Activated naive CD8-positive, alpha-beta T cell treated with anti-CD3 and anti-CD28 coated beads, Interleukin-2, amount 10 ng/mL, durations not matched to agents 7 days and 5 days (primary cell): ENCODE measurements at regions of chr3 and their contacts with region 1.

Region 1: DNA sequence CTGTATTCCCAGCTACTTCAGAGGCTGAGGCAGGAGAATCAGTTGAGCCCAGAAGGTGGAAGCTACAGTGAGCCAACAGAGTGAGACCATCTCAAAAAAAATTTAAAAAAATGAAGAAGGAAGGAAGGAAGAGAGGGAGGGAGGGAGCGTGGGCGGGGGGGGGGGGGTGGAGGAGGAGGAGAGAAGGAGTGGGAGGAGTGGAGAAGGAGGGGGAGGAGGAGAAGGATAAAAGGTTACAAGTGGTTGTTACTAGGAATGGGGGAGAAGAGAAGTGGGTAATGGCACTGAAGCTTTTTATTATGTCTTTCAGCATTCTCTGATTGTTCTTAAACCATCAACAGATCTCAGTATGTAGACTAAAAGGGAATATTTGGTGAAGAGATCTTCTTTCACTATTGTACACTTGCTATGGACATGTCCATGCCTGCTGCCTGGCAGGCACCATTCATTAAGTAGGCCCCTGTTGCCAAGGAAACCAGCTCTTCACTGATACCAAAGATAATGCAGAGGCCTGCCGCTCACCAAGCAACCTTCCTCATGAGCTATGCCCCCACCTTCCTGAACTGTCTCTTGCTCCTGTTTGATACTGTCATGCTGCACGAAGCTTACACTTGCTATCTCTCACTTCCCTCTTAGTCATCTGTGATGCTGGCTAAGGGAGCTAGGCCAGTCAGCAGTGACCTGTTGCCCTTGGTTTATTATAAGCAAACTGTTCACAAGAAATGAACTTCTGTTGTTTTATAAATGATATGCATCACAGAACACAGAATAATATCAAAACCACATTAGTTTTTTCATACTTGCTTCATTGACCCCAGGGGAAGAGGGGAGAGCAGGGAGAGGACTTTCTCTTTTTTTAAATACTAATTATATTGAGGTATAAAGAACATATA is 23.1 kb downstream of the EPM2AIP1 start:
- DNase-seq: no peak
- ATAC-seq: peak; percentile 94
- H3K4me3 Mint-ChIP-seq: peak overlapping the region; percentile 26
- H3K27ac Mint-ChIP-seq: peak overlapping the region; percentile 64
- H3K4me1 Mint-ChIP-seq: peaks cover 33% of the 10 kb centered on the region
- H3K27me3 Mint-ChIP-seq: no peaks in the 10 kb centered on the region

Region 2: DNA sequence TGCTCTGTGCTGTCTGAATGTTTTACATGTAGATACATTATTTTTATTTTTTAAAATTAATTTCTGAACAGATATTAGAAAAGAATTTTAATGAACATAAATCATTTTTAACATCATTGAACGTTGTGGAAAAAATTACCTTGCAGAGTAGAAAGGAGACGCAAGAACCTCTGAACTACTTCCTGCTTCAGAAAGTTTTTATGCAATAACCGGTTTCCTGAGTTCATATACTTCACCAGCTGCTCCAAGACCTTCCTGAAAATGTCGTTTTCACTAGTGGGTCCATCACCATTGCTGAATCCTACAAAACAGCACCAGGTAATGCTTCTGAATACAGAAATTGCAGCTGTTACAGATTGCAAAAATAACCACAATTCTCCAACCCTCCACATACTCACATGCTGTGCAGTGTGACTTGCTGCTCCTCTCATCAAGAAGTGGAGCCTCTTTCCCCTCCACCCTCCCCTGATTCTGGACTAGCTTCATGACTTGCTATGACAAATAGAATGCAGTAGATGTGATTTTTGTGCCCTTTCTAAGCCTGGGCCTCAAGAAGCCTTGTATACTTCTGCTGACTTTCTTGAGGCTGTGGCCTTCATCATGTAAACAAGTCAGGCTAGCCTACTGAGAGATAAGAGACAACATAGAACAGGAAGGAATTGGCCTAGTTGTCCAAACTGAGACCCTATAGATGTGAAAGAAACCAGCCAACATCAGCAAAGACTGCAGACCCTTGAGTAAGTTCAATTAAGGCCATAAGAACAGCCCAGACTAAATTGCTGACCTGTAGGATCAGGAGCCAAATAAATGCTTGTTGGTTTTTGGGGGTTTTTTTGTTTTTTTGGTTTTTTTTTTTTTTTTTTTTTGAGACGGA is 105.4 kb before region 1 on chr3:
- POLR2A ChIA-PET with region 1: no interaction called
- DNase-seq: no peak
- ATAC-seq: peak; percentile 44
- H3K4me3 Mint-ChIP-seq: no peak overlapping the region
- H3K27ac Mint-ChIP-seq: peak overlapping the region; percentile 66
- H3K4me1 Mint-ChIP-seq: peaks cover 15% of the 10 kb centered on the region
- H3K27me3 Mint-ChIP-seq: no peaks in the 10 kb centered on the region

Region 3: DNA sequence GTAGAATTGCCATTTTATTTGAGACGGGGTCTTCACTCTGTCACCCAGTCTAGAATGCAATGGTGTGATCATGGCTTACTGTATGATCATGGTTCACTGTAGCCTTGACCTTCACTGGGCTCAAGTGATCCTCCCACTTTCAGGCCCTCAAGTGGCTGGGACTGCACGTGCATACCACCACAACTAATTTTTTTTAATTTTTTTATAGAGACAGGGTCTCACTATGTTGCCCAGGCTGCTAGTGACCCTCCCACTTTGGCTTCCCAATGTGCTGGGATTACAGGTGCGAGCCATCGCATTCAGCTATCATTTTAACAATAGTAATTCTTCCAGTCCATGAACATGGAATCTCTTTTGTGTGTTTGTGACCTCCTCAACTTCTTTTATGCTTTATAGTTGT is 11.2 kb after region 1 on chr3:
- POLR2A ChIA-PET with region 1: no interaction called
- DNase-seq: no peak
- ATAC-seq: no peak
- H3K4me3 Mint-ChIP-seq: no peak overlapping the region
- H3K27ac Mint-ChIP-seq: no peak overlapping the region
- H3K4me1 Mint-ChIP-seq: peaks cover 3% of the 10 kb centered on the region
- H3K27me3 Mint-ChIP-seq: no peaks in the 10 kb centered on the region

Region 4: DNA sequence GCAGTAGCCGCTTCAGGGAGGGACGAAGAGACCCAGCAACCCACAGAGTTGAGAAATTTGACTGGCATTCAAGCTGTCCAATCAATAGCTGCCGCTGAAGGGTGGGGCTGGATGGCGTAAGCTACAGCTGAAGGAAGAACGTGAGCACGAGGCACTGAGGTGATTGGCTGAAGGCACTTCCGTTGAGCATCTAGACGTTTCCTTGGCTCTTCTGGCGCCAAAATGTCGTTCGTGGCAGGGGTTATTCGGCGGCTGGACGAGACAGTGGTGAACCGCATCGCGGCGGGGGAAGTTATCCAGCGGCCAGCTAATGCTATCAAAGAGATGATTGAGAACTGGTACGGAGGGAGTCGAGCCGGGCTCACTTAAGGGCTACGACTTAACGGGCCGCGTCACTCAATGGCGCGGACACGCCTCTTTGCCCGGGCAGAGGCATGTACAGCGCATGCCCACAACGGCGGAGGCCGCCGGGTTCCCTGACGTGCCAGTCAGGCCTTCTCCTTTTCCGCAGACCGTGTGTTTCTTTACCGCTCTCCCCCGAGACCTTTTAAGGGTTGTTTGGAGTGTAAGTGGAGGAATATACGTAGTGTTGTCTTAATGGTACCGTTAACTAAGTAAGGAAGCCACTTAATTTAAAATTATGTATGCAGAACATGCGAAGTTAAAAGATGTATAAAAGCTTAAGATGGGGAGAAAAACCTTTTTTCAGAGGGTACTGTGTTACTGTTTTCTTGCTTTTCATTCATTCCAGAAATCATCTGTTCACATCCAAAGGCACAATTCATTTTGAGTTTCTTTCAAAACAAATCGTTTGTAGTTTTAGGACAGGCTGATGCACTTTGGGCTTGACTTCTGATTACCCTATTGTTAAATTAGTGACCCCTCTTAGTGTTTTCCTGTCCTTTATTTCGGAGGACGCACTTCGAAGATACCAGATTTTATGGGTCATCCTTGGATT is 23.8 kb after region 1 on chr3 and contains the start of gene MLH1:
- POLR2A ChIA-PET with region 1: interaction called, 10 read pairs
- DNase-seq: peak; percentile 93
- ATAC-seq: peak; percentile 84
- H3K4me3 Mint-ChIP-seq: no peak within 1 kb of the TSS
- H3K27ac Mint-ChIP-seq: no peak within 1 kb of the TSS
- H3K4me1 Mint-ChIP-seq: peaks cover 38% of the 10 kb centered on the region
- H3K27me3 Mint-ChIP-seq: no peaks in the 10 kb centered on the region
- total RNA-seq, gene MLH1: 52.3 to 54.0 TPM

Region 5: DNA sequence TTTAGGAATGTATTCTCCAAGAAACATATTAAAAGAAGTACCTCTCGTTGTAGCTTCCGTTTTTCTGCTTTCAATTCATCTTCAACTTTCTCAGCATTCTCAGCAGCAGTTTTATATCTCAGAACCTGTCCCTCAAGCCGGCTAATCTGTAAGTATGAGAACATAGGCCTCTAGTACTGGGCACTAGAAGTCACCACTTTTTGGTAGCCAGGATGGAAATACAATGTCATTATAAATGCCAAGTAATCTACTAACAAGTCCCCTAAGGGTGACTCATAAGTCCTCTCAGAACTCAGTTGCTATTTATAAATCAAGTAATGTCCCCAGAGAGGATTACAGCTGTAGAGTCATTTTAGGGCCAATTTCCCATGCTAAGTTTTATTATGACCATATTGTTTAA is 84.6 kb after region 1 on chr3:
- POLR2A ChIA-PET with region 1: no interaction called
- DNase-seq: no peak
- ATAC-seq: no peak
- H3K4me3 Mint-ChIP-seq: no peak overlapping the region
- H3K27ac Mint-ChIP-seq: no peak overlapping the region
- H3K4me1 Mint-ChIP-seq: peaks cover 1% of the 10 kb centered on the region
- H3K27me3 Mint-ChIP-seq: no peaks in the 10 kb centered on the region